ENCODE measurements at regions of chr17 and their contacts with region 1.

Region 1: DNA sequence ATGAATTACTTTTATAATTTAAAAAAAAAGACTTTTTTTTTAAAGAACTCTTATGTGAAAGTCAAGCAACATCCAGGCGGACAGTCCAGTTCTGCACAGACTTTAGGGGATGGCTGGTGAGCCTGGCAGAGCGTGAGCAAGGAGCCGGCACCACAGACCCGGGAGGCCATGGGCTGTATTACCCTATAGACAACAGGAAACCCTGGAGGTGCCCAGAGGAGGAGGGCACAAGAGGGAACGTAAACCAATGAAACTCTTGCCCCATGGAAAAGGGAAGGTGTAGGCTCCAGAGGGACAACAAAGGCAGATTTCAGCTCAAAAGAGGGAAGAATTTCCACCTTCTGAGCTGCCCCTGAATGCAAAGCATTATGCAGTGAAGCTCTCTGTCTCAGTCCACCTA is 25.5 kb upstream of the RPH3AL start:
- DNase-seq: no peak
- H3K4me3 ChIP-seq: no peak overlapping the region
- H3K27ac ChIP-seq: no peak overlapping the region
- H3K4me1 ChIP-seq: no peaks in the 10 kb centered on the region
- H3K27me3 ChIP-seq: no peaks in the 10 kb centered on the region
- CTCF ChIP-seq: no peak

Region 2: GRCh38 chr17:265718-266117 is 112.3 kb before region 1 on chr17:
- CTCF ChIA-PET with region 1: no interaction called
- POLR2A ChIA-PET with region 1: interaction called, 12 read pairs
- intact Hi-C with region 1: no loop called
- DNase-seq: no peak
- H3K4me3 ChIP-seq: no peak overlapping the region
- H3K27ac ChIP-seq: no peak overlapping the region
- H3K4me1 ChIP-seq: no peaks in the 10 kb centered on the region
- H3K27me3 ChIP-seq: no peaks in the 10 kb centered on the region
- CTCF ChIP-seq: no peak